Posterior vena cava (tissue), 2 donors: ENCODE measurements at regions of chr10 and their contacts with region 1.

Region 1: GRCh38 chr10:102352066-102352715 is 43.3 kb upstream of the NFKB2 start:
- DNase-seq: no peak

Region 2: GRCh38 chr10:102167861-102168260 is 184.3 kb before region 1 on chr10:
- intact Hi-C with region 1: loop called in 1 of 2 experiments (anchors 10 kb)
- DNase-seq: no peak

Region 3: GRCh38 chr10:102229810-102230263 is 122.4 kb before region 1 on chr10:
- intact Hi-C with region 1: loop called (anchors 2 to 5 kb)
- DNase-seq: peak; percentile 95

Region 4: DNA sequence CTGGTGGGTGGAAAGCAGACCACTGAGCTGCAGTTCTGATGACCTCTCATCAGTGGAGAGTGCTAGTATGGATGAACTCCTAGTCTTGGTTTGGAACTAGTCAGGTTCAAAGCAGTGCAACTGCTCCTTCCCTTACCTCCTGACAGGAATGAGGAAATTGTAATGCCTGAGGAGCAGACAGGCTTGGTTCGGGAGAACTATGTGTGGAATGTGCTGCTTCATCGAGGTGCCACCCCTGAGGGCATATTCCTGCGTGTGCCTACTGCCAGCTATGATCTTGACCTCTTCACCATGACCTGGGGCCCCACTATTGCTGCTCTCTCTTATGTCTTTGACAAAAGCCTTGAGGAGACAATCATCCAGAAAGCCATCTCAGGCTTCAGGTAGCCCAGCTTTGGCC is 15.9 kb after region 1 on chr10:
- intact Hi-C with region 1: loop called in 1 of 2 experiments (anchors 1 kb)
- DNase-seq: no peak